Activated CD4-positive, alpha-beta memory T cell treated with anti-CD3 and anti-CD28 coated beads for 36 hours (primary cell): ENCODE measurements at regions of chr9 and their contacts with region 1.

Region 1: DNA sequence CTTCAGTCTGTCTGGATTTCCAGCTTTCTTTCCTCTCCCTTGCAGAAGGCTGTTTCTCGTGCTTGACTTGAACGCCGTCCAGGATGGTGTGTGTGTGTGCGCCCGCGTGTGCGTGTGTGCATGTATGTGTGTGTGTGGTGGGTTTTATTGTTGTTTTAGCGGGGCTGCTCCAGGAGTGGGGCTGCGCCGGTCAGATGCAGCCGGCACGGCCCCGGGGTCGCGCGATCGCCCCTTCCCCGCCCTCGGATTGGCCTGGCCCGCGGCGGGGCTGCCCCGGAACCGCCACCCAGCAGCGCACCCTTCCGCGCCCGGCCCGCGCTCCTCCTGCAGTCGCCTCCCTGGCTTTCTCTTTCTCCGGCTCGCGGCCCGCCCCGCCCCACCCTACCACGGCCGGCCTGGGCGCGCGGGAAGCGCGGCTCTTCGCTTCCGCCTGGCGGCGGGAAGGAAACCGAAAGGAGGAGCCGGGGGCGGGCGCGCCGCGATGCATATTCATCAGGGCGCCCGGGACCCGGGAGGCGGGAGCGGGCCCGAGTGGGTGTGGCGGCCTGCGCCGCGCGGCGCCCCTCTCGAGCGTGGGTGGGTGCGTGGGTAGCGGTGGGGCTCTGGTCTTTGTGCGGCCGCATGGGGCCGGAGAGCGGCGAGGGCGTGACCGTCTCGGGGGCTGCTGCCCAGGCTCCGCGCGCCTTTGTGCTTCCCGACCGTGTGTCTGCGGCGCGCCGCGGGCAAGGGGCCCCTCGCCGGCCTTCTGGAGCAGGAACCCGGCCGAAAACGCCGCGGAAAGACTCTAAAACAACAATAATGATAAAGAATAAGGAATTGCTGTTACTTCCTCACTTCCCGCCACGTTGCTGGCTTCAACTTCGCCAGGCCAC is 8.5 kb upstream of the NFIB start:
- DNase-seq: peak; percentile 88
- H3K4me3 Mint-ChIP-seq: peak overlapping the region; percentile 75
- H3K27ac Mint-ChIP-seq: peak overlapping the region; percentile 49
- H3K4me1 Mint-ChIP-seq: peaks cover 23% of the 10 kb centered on the region
- H3K27me3 Mint-ChIP-seq: peaks cover 36% of the 10 kb centered on the region

Region 2: DNA sequence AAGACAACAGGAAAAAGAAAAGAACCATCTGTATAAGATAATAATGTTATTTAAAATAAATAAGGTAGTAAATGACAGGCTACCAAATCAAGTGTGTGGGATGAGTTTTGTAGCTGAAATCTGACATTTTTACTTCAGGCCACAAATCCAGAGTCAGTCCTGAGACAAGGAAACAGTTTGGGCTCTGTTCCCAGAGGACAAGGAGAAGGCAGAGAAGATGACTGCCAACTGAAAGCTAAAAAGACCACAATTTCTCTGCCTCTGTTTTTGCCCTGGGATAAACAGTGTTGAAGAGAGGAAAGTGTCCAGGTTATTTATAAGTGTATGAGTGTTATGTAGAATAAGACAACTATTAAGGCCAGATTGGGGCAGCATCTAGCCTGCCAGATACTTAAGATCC is 189.1 kb before region 1 on chr9:
- CTCF ChIA-PET with region 1: no interaction called
- POLR2A ChIA-PET with region 1: no interaction called
- intact Hi-C with region 1: no loop called
- DNase-seq: no peak
- H3K4me3 Mint-ChIP-seq: no peak overlapping the region
- H3K27ac Mint-ChIP-seq: no peak overlapping the region
- H3K4me1 Mint-ChIP-seq: no peaks in the 10 kb centered on the region
- H3K27me3 Mint-ChIP-seq: no peaks in the 10 kb centered on the region

Region 3: GRCh38 chr9:14156046-14156445 is 166.4 kb before region 1 on chr9:
- CTCF ChIA-PET with region 1: no interaction called
- POLR2A ChIA-PET with region 1: no interaction called
- intact Hi-C with region 1: no loop called
- DNase-seq: no peak
- H3K4me3 Mint-ChIP-seq: no peak overlapping the region
- H3K27ac Mint-ChIP-seq: no peak overlapping the region
- H3K4me1 Mint-ChIP-seq: peaks cover 6% of the 10 kb centered on the region
- H3K27me3 Mint-ChIP-seq: peaks cover 4% of the 10 kb centered on the region

Region 4: DNA sequence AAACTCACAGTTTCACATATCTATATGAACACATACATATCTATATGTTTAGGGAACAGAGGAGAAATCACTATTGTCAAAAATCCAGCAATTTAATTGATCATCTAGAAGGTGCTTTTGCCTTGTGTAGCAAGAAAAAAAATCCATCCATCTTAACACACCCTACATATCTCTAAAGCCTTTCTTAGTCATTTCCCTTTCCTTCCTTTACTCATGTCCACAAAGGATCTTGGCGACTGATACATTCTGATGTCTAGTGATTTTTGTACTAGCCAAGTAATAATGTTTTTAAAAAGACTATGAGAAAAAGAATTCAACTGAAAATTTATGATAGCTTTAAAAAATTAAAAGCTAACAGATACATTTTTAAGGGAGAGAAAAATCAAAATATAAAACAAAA is 348.3 kb after region 1 on chr9:
- CTCF ChIA-PET with region 1: no interaction called
- POLR2A ChIA-PET with region 1: no interaction called
- intact Hi-C with region 1: loop called (anchors 5 kb)
- DNase-seq: no peak
- H3K4me3 Mint-ChIP-seq: no peak overlapping the region
- H3K27ac Mint-ChIP-seq: peak overlapping the region; percentile 69
- H3K4me1 Mint-ChIP-seq: peaks cover 13% of the 10 kb centered on the region
- H3K27me3 Mint-ChIP-seq: no peaks in the 10 kb centered on the region

Region 5: DNA sequence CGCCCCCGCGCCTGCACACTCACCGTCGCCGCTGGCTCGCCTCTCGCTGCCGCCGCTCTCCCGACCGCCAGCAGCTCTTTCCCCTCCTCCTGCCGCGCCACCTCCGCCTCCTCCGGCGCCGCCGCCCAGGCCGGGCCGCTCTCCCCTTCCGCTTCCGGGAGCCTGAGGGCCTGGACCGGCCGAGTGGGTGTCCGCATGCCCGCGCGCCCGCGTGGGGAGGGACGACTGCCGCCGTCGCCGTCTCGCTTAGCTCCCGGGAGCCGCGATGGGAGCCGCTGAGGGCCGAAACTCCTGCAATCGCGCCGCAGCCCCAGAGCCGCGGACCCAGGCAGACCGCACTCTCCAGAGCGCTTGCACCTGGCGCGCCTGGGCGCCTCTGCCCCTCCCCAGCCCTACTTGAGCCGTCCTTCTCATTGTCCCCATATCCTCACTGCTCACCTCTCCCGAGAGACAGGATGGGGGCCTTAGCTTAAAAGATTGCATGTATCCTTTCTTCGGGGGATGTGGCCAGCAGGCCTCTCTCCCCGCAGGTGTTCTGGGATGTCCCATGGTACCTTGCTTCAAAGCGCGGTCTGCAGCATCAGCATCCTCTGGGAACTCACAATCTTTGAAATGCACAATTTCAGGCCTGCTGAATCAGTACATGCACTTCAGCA is 370.9 kb after region 1 on chr9 and contains the start of gene ZDHHC21:
- CTCF ChIA-PET with region 1: no interaction called
- POLR2A ChIA-PET with region 1: no interaction called
- intact Hi-C with region 1: loop called (anchors 5 kb)
- DNase-seq: peak; percentile 70
- H3K4me3 Mint-ChIP-seq: peak within 1 kb of the TSS; percentile 90
- H3K27ac Mint-ChIP-seq: peak within 1 kb of the TSS; percentile 78
- H3K4me1 Mint-ChIP-seq: peaks cover 41% of the 10 kb centered on the region
- H3K27me3 Mint-ChIP-seq: peaks cover 4% of the 10 kb centered on the region
- total RNA-seq, gene ZDHHC21: 5.1 to 6.7 TPM

Region 6: GRCh38 chr9:15306757-15307534 is 984.5 kb after region 1 on chr9 and contains the start of gene TTC39B:
- CTCF ChIA-PET with region 1: no interaction called
- POLR2A ChIA-PET with region 1: no interaction called
- intact Hi-C with region 1: loop called (anchors 10 kb)
- DNase-seq: peak; percentile 89
- H3K4me3 Mint-ChIP-seq: peak within 1 kb of the TSS; percentile 99
- H3K27ac Mint-ChIP-seq: peak within 1 kb of the TSS; percentile 96
- H3K4me1 Mint-ChIP-seq: peaks cover 48% of the 10 kb centered on the region
- H3K27me3 Mint-ChIP-seq: no peaks in the 10 kb centered on the region
- total RNA-seq, gene TTC39B: 30.3 to 31.7 TPM